Activated naive CD4-positive, alpha-beta T cell treated with anti-CD3 and anti-CD28 coated beads for 36 hours (primary cell): ENCODE measurements at regions of chr2 and their contacts with region 1.

Region 1: DNA sequence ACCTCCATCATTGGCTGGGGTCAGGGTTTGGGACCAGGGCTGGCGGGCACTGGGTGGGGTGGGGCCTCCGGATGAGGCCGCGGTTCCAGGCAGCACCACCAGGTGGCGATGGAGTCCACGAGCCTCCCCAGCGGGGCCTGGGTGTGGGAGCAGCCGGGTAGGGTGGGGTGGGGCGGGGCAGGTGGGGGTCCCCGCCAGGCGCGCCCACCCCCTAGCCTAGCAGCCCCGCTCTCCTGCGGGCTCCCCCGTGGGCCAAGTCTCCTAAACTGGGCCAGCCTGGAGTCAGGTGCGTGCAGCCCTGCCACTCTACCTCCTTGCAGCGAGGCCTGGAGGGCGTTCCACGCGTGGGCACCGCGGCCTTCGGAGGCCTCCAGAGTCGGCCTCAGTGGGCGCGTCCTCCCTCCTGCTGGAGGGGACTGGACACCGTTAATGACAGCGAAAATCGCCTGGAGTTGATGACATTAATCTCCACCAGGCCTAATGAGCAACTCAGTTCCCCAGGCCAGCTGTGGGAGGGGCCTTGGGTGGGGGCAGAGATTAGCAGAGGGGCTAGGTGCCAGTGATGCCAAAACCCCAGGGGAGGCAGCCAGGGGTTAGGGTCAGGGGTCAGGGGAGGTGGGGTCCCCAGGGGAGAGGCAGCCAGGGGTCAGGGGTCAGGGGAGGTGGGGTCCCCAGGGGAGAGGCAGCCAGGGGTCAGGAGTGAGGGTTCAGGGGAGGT is 187.6 kb downstream of the TWIST2 start:
- DNase-seq: peak; percentile 72
- H3K4me3 Mint-ChIP-seq: no peak overlapping the region
- H3K27ac Mint-ChIP-seq: no peak overlapping the region
- H3K4me1 Mint-ChIP-seq: no peaks in the 10 kb centered on the region
- H3K27me3 Mint-ChIP-seq: peaks cover 11% of the 10 kb centered on the region

Region 2: GRCh38 chr2:239106314-239106908 is 70.9 kb after region 1 on chr2:
- CTCF ChIA-PET with region 1: no interaction called
- intact Hi-C with region 1: loop called (anchors 10 kb)
- DNase-seq: peak; percentile 18
- H3K4me3 Mint-ChIP-seq: no peak overlapping the region
- H3K27ac Mint-ChIP-seq: no peak overlapping the region
- H3K4me1 Mint-ChIP-seq: no peaks in the 10 kb centered on the region
- H3K27me3 Mint-ChIP-seq: no peaks in the 10 kb centered on the region

Region 3: GRCh38 chr2:239257511-239257937 is 222.0 kb after region 1 on chr2:
- CTCF ChIA-PET with region 1: no interaction called
- intact Hi-C with region 1: no loop called
- DNase-seq: peak; percentile 53
- H3K4me3 Mint-ChIP-seq: peak overlapping the region; percentile 17
- H3K27ac Mint-ChIP-seq: peak overlapping the region; percentile 85
- H3K4me1 Mint-ChIP-seq: peaks cover 87% of the 10 kb centered on the region
- H3K27me3 Mint-ChIP-seq: no peaks in the 10 kb centered on the region

Region 4: DNA sequence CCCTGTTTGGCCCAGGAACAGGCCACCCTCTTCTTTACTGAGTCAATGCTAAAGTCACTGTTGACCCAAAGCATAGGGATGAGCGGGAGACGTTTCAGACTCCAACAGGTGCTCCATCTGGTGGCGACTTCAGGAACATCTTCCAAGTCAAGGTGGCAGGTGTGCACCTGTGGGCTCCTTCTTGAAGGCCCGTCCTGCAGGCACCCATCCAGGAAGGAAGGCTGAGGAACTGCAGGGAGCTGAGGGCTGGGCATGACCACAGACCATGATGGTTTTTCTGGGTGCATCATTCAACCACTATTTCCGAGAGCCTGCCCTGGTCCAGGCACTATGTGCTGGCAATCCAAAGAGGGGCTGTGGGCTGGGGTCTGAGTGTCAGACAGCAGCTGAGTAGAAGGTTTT is 846.8 kb after region 1 on chr2:
- CTCF ChIA-PET with region 1: no interaction called
- intact Hi-C with region 1: loop called (anchors 5 kb)
- DNase-seq: peak; percentile 77
- H3K4me3 Mint-ChIP-seq: no peak overlapping the region
- H3K27ac Mint-ChIP-seq: no peak overlapping the region
- H3K4me1 Mint-ChIP-seq: peaks cover 3% of the 10 kb centered on the region
- H3K27me3 Mint-ChIP-seq: peaks cover 7% of the 10 kb centered on the region

Region 5: GRCh38 chr2:239991689-239992314 is 956.3 kb after region 1 on chr2:
- CTCF ChIA-PET with region 1: no interaction called
- intact Hi-C with region 1: loop called (anchors 5 kb)
- DNase-seq: peak; percentile 22
- H3K4me3 Mint-ChIP-seq: no peak overlapping the region
- H3K27ac Mint-ChIP-seq: no peak overlapping the region
- H3K4me1 Mint-ChIP-seq: no peaks in the 10 kb centered on the region
- H3K27me3 Mint-ChIP-seq: no peaks in the 10 kb centered on the region